Upper lobe of right lung (tissue), 1 donor: ENCODE measurements at regions of chr10 and their contacts with region 1.

Region 1: GRCh38 chr10:102352066-102352715 is 43.3 kb upstream of the NFKB2 start:
- DNase-seq: no peak
- ATAC-seq: peak; percentile 78
- H3K4me3 ChIP-seq: no peak overlapping the region
- H3K27ac ChIP-seq: no peak overlapping the region
- H3K4me1 ChIP-seq: no peaks in the 10 kb centered on the region
- H3K27me3 ChIP-seq: no peaks in the 10 kb centered on the region
- CTCF ChIP-seq: peak; percentile 92

Region 2: DNA sequence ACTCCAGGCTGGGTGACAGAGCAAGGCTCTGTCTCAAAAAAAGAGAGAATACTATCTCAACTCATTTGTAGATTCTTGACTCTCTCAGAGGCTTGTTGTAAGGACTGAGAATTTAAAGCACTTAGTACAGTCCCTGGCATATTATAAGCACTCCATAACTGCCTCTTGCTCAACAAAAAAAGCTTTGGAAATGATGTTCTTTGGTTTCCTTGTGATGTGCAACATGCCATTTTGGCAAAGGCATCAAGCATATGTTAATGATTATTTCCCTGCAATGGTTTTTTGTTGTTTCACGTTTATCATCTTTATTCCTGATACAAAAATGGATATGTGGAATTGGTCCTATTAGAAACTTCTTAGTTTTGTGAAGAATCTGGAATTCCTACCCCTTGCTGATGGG is 184.3 kb before region 1 on chr10:
- intact Hi-C with region 1: loop called (anchors 10 kb)
- DNase-seq: no peak
- ATAC-seq: no peak
- H3K4me3 ChIP-seq: no peak overlapping the region
- H3K27ac ChIP-seq: no peak overlapping the region
- H3K4me1 ChIP-seq: no peaks in the 10 kb centered on the region
- H3K27me3 ChIP-seq: no peaks in the 10 kb centered on the region
- CTCF ChIP-seq: no peak

Region 3: DNA sequence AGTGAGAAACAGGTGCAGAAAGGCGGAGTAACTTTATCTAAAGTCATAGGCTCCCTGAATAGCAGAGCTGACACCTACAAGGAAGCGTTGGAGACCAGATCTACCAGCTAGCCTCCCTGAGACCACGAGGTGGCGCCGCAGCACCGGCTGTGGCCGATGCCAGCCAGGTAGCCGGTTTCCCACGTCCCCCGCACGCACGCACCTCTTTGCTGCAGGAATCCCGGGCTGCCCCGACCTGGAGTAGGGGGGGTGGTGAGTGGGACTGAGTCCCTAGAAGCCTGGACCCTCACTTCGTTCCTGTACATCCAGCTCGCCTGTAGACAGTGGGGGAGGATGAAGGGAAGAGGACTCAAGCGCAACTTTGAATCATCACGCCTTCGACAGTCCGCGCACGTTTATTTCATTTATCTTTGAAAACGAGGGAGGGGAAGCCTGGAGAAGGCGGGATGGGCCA is 122.4 kb before region 1 on chr10:
- intact Hi-C with region 1: loop called (anchors 5 kb)
- DNase-seq: peak; percentile 92
- ATAC-seq: peak; percentile 75
- H3K4me3 ChIP-seq: peak overlapping the region; percentile 50
- H3K27ac ChIP-seq: no peak overlapping the region
- H3K4me1 ChIP-seq: peaks cover 40% of the 10 kb centered on the region
- H3K27me3 ChIP-seq: peaks cover 34% of the 10 kb centered on the region
- CTCF ChIP-seq: peak; percentile 94

Region 4: GRCh38 chr10:102534333-102534732 is 182.1 kb after region 1 on chr10:
- intact Hi-C with region 1: no loop called
- DNase-seq: peak; percentile 72
- ATAC-seq: peak; percentile 93
- H3K4me3 ChIP-seq: no peak overlapping the region
- H3K27ac ChIP-seq: no peak overlapping the region
- H3K4me1 ChIP-seq: no peaks in the 10 kb centered on the region
- H3K27me3 ChIP-seq: no peaks in the 10 kb centered on the region
- CTCF ChIP-seq: no peak